ENCODE measurements at regions of chr9 and their contacts with region 1.

Region 1: DNA sequence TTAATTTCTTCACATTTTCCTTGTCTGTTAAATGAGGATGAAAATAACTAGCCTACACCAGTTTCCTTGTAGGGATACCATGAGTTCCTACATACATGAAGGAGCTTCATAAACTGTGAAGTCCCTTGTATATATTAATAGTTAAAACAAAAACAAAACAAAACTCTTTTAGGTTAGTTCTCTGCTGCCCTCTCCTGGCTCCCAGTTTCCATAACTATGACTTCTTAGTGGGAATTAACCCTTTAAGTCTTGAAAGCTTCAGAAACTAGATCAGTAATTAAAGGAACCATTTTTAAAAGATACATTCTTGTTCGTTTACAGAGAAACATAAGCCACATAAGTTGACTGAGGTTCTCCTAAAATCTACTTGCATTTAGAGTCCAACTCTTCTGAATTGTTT is 500.0 kb upstream of the C9orf72 start:
- DNase-seq: no peak
- CTCF ChIP-seq: peak; percentile 30

Region 2: DNA sequence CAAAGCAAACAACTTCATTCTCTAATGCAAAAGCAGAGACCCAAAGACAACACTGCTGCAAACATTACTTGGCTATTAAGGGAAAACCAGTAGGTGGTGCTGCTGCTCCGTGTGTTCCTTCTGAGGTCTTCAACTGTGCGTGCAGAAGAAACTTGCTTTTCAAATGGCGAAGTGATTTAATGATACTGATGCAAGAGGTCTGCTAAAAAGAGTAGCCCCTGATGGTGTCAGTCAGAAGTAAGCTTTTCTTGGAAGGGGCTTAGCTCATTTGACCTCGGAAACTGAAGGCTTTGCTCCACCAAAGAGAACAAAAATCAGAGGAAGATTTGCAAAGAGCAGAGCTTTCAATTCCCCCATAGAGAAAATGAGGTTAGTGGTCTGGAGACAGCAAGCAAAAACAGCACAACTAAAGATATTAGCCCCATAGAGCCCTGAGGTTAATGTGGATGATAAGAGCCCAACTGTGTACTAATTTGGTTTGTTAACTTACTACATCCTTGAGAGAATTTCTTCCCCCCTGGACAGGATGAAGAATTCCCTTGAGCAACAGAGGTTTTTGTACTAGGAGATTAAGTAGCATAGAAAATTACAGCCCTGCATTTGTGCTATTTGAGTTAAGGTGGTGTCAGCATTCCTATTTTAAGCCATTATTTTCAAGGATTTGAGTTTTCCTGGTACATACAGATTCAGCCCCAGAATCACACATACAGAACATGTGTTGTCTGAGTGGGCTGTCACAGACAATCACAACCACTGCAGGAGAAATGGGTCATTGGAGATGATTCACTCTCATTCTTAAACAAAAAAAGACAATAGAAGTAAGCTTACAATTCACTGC is 346.8 kb before region 1 on chr9:
- CTCF ChIA-PET with region 1: interaction called, 15 read pairs
- POLR2A ChIA-PET with region 1: no interaction called
- DNase-seq: peak; percentile 28
- CTCF ChIP-seq: peak; percentile 84